ENCODE measurements at regions of chr2 and their contacts with region 1.

Region 1: DNA sequence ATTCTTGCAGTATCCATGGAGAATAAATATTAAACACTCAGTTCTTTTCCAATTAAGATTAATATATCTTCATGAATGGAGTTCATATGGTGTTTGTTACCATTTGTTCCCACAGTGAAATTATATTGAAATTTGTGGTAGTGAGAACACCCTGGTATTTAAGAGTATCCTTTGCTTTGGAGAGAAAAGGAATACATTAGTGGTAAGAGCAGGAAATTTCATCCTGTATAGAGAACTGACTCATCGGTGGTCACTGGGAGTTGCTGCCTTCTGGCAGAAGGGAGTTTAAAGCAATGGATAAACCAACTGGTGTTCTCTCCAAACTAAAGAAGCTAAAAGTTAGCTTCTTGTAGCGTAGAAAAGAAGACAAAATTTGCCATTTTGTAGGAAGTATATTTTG is 107.3 kb downstream of the MYO1B start:
- DNase-seq: no peak
- H3K4me3 Mint-ChIP-seq: no peak overlapping the region
- H3K27ac Mint-ChIP-seq: no peak overlapping the region
- H3K4me1 Mint-ChIP-seq: no peaks in the 10 kb centered on the region
- H3K27me3 Mint-ChIP-seq: no peaks in the 10 kb centered on the region

Region 2: GRCh38 chr2:190216829-190217228 is 1135.7 kb before region 1 on chr2:
- intact Hi-C with region 1: loop called (anchors 10 kb)
- DNase-seq: no peak
- H3K4me3 Mint-ChIP-seq: no peak overlapping the region
- H3K27ac Mint-ChIP-seq: no peak overlapping the region
- H3K4me1 Mint-ChIP-seq: peaks cover 3% of the 10 kb centered on the region
- H3K27me3 Mint-ChIP-seq: no peaks in the 10 kb centered on the region

Region 3: DNA sequence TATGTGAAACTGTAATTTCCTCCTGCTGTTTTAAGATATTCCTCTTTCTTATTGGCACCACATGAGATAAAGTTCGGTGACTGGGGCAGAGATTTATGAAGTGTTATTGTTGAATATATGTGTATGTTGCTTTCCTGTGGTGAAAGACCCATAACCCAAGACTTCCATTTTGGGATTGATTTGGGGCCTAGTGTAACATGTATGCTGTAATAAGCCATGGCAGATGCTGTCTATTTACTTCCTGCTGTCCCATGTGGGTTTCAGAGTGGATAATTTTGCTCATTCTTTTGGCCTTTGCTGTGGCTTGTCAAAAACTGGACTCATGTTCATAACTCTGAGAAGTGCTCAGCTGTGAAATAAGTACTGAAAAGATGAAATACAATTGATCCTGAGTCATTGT is 118.2 kb before region 1 on chr2:
- intact Hi-C with region 1: no loop called
- DNase-seq: no peak
- H3K4me3 Mint-ChIP-seq: no peak overlapping the region
- H3K27ac Mint-ChIP-seq: no peak overlapping the region
- H3K4me1 Mint-ChIP-seq: no peaks in the 10 kb centered on the region
- H3K27me3 Mint-ChIP-seq: no peaks in the 10 kb centered on the region

Measured in activated T-helper 2 cell treated with anti-CD3 and anti-CD28 coated beads, Interferon-gamma antibody, Interleukin-2, Interleukin-4, amounts not matched to agents 10 μg/mL and 5 μg/mL and 100 μg/mL, durations not matched to agents 14 hours and 24 hours and 36 hours (primary cell).